B cell (primary cell): ENCODE measurements at regions of chr2 and their contacts with region 1.

Region 1: DNA sequence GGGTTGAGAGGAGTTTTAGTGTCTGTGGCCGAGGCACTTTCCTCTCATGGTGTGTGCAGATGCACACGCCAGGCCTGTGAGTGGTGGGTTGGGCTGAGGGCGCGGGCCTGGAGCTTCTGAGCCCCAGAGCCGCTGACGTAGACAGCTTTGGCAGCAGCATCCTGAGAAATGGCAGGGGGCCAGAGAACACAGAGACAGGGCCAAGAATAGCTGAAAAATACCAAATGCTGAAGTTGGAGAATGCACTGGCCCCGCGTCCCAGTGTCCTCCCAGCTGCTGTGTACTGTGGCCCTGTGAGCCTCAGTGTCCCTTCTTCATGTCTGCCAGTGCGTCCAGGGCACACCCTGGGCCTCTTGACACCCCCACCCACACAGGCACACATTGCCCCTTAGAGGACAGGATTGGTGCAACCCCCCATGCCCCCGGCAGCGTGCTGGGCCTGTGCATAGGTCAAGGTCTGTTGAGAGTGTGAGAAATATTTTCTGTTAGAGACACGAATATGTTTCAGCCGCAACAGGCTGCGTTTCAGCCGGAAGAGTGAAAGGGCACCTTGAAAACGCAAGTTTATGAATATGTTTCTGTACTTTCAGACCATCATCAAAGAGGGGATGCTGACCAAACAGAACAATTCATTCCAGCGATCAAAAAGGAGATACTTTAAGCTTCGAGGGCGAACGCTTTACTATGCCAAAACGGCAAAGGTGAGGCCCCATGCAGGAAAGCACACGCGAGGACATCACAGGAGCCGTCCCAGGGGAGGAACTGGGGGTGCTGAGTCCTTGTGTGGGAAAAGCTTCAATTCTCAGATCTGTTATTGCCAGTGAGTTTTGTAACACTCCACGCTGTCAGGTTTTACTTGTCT is 33.6 kb downstream of the DGKD start:
- DNase-seq: no peak
- ATAC-seq: no peak
- H3K4me3 ChIP-seq: no peak overlapping the region
- H3K4me3 Mint-ChIP-seq: peak overlapping the region; percentile 37
- H3K27ac ChIP-seq: peak overlapping the region in 1 of 2 donors; percentile 85
- H3K27ac Mint-ChIP-seq: peak overlapping the region; percentile 76
- H3K4me1 ChIP-seq: peaks cover 52 to 54% of the 10 kb centered on the region in 2 donors
- H3K4me1 Mint-ChIP-seq: peaks cover 68% of the 10 kb centered on the region
- H3K27me3 ChIP-seq: no peaks in the 10 kb centered on the region
- H3K27me3 Mint-ChIP-seq: no peaks in the 10 kb centered on the region
- CTCF ChIP-seq: no peak

Region 2: DNA sequence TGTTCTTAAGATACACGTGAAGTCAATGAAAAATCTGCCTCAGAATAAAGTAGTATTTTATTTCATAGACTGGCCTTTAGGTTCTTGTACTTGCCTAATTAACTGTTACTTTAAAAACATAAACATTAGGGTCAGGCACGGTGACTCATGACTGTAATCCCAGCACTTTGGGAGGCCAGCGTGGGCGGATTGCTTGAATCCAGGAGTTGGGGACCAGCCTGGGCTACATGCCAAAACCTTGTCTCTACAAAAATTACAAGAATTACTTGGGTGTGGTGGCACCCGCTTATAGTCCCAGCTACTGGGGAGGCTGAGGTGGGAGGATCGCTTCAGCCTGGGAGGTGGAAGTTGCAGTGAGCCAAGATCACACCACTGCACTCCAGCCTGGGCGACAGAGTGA is 533.8 kb before region 1 on chr2:
- CTCF ChIA-PET with region 1: interaction called, 5 read pairs
- POLR2A ChIA-PET with region 1: no interaction called
- intact Hi-C with region 1: loop called (anchors 10 kb)
- DNase-seq: no peak
- ATAC-seq: no peak
- H3K4me3 ChIP-seq: no peak overlapping the region
- H3K4me3 Mint-ChIP-seq: no peak overlapping the region
- H3K27ac ChIP-seq: no peak overlapping the region
- H3K27ac Mint-ChIP-seq: no peak overlapping the region
- H3K4me1 ChIP-seq: no peaks in the 10 kb centered on the region
- H3K4me1 Mint-ChIP-seq: no peaks in the 10 kb centered on the region
- H3K27me3 ChIP-seq: no peaks in the 10 kb centered on the region
- H3K27me3 Mint-ChIP-seq: no peaks in the 10 kb centered on the region
- CTCF ChIP-seq: no peak

Region 3: GRCh38 chr2:233267516-233268245 is 120.2 kb before region 1 on chr2:
- CTCF ChIA-PET with region 1: interaction called, 10 read pairs
- POLR2A ChIA-PET with region 1: no interaction called
- intact Hi-C with region 1: no loop called
- DNase-seq: peak; percentile 78
- ATAC-seq: peak; percentile 94
- H3K4me3 ChIP-seq: no peak overlapping the region
- H3K4me3 Mint-ChIP-seq: peak overlapping the region; percentile 48
- H3K27ac ChIP-seq: peak overlapping the region; percentile 57 to 73
- H3K27ac Mint-ChIP-seq: peak overlapping the region; percentile 75
- H3K4me1 ChIP-seq: peaks cover 30 to 38% of the 10 kb centered on the region in 2 donors
- H3K4me1 Mint-ChIP-seq: peaks cover 49% of the 10 kb centered on the region
- H3K27me3 ChIP-seq: no peaks in the 10 kb centered on the region
- H3K27me3 Mint-ChIP-seq: no peaks in the 10 kb centered on the region
- CTCF ChIP-seq: no peak